ENCODE measurements at regions of chr19 and their contacts with region 1.

Region 1: DNA sequence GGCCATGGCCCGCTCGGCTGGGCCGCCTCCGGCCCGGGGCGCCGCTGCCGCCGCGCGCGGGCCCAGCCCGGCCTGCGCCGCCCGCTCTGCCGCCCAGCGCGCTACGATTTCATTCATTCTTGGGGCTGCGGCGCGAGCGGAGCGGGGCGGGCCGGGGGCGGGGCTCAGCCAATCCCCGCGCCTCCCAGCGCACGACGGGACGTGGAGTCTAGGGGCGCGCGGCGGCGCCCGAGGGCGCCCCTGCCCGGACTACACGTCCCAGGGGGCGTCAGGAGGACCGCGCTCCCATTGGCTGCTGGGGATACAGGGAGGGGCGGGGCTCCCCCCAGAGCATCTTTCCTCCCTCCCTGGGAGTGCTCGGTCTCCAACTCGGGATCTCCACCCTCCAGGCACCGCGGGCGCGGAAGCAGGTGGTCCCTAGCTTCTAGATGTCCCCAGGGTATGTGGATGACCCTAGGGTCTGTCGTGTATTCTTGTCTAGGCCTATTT is 5.6 kb upstream of the DPF1 start:
- DNase-seq: peak; percentile 54
- H3K4me3 ChIP-seq: peak overlapping the region; percentile 45
- H3K27me3 ChIP-seq: no peaks in the 10 kb centered on the region
- CTCF ChIP-seq: no peak

Region 2: DNA sequence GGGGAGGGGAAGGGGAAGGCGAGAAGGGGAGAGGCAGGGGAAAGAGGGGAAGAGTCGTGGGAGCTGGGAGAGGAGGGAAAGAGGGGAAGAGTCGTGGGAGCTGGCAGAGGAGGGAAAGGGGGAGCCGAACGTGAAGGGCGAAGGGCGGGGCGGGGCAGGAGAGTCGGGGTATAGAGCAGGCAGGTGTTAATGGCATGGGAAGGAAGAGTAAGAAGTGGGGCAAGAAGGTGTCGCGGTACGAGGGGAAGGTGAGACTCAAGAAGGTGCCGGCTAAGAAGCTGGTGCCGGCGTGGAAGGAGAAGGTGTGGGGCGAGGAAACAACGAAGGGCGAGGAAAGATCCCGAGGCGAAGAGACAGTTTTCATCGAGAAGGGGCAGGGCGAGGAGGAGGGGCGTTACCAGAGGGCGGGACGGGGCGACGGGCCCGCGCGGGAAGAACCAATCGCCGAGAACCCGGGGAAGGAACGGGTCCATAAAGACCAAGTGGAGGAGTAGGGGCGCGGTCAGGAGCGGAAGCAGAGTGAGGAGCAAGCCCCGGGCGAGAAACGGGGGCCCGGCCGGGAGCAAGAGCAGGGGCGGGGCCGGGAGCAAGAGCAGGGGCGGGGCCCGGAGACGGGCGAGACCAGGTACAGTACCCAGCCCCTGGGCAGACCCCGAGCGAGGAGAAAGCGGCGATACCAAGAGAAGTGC is 106.5 kb after region 1 on chr19:
- CTCF ChIA-PET with region 1: interaction called, 43 read pairs
- POLR2A ChIA-PET with region 1: no interaction called
- DNase-seq: peak; percentile 80
- H3K4me3 ChIP-seq: peak overlapping the region; percentile 76
- H3K27me3 ChIP-seq: no peaks in the 10 kb centered on the region
- CTCF ChIP-seq: no peak

Region 3: DNA sequence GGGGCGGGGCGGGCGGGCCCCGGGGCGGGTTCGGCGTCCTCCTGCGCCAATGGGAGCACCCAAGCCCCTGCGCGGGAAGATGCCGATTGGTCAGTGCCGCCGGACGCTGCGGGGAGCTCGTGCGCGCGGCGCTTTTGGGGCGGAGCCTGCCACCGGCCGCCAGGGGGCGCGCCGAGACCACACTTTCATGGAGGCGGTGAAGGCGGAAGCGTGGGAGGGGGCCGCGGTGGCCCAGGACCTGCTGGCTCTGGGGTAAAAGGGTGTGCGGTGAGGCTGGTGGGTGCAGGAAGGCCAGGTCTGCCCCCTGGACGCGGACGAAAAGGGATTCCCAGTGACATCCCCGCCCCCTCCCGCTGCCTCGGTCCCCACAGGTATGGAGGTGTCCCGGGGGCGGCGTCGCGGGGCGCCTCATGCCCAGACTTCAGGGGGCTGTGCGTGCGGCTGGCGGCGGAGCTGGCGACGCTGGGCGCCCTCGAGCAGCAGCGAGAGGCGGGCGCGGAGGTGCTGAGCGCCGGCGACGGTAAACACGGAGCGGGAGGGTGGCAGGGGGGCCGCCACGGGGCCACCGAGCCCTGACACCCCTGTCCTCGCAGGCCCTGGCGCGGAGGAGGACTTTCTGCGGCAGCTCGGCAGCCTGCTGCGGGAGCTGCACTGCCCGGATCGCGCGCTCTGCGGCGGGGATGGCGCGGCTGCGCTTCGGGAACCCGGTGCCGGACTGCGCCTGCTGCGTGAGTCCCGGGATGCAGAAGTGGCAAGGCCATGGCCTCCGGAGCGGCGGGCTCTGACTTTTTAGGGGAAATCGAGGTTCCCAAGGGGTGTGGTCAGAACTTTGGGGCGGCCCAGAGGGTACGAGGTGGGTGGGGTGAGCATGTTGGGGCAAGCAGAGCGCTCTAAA is 173.6 kb after region 1 on chr19 and contains the start of gene FAM98C:
- CTCF ChIA-PET with region 1: interaction called, 16 read pairs
- POLR2A ChIA-PET with region 1: no interaction called
- DNase-seq: peak; percentile 65
- H3K4me3 ChIP-seq: peak within 1 kb of the TSS; percentile 88
- H3K27me3 ChIP-seq: no peaks in the 10 kb centered on the region
- CTCF ChIP-seq: peak; percentile 74
- polyA plus RNA-seq, gene FAM98C: 9.9 and 12.2 TPM in 2 replicates

Measured in BJ (cell line).